Head of caudate nucleus (tissue), 42 donors: ENCODE measurements at regions of chr5 and their contacts with region 1.

Region 1: GRCh38 chr5:141564216-141564692 is 54.5 kb downstream of the DIAPH1 start:
- DNase-seq: peak in 37 of 42 donors; percentile 13 to 89 (median 65)

Region 2: DNA sequence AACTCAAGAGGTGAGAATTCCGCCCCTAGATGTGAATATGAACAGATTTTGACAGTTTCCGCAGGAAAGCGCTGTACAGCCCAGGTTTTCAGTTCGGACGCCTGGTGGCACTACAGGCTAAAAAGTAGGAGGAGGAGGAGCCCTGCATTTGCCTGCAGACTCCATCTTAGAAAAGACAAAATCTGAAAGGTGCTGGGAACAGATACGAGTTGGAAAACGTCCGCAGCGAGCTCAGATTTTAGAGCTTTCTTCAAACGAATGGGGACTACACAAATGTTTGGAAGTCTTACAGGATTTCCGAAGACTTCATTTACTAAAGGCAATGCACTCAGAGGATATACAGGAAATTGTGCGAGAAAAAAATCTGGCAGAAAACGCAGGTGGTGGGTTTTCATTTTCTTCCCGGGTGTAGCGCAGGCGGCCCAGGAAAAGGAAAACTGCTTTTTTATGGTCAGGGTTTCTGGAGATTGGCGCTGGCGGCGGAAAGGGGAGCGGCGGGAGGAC is 479.7 kb before region 1 on chr5:
- intact Hi-C with region 1: loop called (anchors 5 kb)
- DNase-seq: peak in 41 of 42 donors; percentile 26 to 85 (median 67)

Region 3: DNA sequence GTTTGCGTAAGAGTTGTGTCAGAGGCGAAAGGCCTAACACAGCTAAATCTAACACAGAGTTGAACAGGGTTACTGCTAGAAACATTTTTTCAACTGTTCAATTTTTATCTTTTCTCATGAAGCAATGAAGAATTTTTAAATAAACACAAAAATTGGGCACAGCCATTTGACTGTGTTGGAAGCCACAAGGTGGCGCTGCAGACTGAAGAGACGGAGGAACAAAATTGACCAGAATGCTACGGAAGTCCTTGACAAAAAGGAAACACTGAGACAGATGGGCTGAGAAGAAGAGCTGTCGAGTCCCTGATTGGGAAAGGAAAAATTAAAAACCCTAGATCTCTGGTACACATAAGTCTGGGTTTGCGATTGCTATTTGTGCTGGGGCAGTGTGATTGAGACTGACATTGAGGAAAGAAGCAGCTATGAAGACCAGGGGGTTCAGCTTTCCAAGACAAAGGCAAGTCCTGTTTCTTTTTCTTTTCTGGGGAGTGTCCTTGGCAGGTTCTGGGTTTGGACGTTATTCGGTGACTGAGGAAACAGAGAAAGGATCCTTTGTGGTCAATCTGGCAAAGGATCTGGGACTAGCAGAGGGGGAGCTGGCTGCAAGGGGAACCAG is 377.2 kb before region 1 on chr5 and contains the start of gene PCDHB9:
- intact Hi-C with region 1: loop called (anchors 10 kb)
- DNase-seq: peak in 23 of 42 donors; percentile 9 to 74 (median 39)

Region 4: GRCh38 chr5:141605523-141606277 is 41.4 kb after region 1 on chr5:
- intact Hi-C with region 1: no loop called
- DNase-seq: peak in 20 of 42 donors; percentile 9 to 63 (median 38)

Region 5: DNA sequence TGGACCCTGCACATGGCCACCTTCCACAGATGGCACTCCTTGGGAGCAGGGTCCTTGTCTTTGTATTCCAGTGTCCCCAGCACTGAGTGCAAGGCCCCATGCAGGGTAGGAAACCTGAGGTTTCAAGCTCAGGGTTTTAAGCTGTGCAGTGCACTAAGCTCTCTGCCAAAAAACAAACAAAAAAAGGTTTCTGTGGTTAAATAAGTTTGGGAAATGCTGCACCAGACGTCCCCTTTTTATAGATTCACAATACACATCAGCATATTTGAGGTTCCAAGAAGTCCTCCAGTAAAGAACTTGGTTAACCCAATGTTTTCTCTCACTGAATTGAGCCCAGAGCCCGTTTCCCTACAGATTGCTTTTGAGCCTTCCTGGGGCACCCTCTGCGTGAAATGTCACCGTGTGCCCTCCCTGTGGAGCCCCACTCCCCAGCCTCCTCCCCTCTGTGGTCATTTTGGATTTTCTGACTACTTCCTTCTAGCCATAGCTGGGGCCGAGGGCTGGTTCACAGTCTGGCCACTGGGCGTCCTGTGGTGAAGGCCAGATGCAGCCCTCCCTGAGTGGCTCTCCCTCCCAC is 376.5 kb after region 1 on chr5:
- intact Hi-C with region 1: no loop called
- DNase-seq: peak in 20 of 42 donors; percentile 22 to 68 (median 46)